Activated T-helper 2 cell treated with anti-CD3 and anti-CD28 coated beads, Interferon-gamma antibody, Interleukin-2, Interleukin-4, amounts not matched to agents 10 μg/mL and 5 μg/mL and 100 μg/mL, durations not matched to agents 14 hours and 24 hours and 36 hours (primary cell): ENCODE measurements at regions of chrX and their contacts with region 1.

Region 1: DNA sequence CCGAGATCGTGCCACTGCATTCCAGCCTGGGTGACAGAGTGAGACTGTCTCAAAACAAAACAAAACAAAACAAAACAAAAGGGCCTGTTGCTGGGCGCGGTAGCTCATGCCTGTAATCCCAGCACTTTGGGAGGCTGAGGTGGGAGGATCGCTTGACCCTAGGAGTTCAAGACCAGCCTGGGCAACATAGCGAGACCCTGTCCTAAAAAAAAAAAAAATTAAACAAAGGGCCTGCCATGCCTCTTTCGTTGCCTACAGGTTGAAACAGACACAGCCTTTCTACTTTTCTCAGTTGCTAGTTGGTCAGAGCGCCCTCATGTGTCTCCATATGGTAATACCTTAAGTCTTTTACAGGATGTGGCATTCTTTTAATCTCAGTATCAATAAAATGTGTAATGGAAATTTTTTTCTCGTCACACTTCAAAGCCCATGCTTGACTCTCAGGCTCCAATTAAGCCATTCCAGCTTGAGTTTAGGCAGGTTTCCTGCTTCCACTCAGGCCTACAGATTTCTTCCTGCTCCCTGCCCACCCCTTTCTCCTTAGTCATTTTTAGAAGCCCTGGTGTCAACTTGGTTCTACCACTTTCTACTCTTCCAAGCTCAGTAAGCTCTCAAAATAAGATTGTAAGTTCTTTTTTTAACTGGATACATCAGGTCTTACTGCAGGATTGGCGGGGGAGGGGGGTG is 4.7 kb upstream of the SOWAHD start:
- DNase-seq: peak; percentile 53
- H3K4me3 Mint-ChIP-seq: no peak overlapping the region
- H3K27ac Mint-ChIP-seq: peak overlapping the region; percentile 83
- H3K4me1 Mint-ChIP-seq: peaks cover 38% of the 10 kb centered on the region
- H3K27me3 Mint-ChIP-seq: no peaks in the 10 kb centered on the region

Region 2: DNA sequence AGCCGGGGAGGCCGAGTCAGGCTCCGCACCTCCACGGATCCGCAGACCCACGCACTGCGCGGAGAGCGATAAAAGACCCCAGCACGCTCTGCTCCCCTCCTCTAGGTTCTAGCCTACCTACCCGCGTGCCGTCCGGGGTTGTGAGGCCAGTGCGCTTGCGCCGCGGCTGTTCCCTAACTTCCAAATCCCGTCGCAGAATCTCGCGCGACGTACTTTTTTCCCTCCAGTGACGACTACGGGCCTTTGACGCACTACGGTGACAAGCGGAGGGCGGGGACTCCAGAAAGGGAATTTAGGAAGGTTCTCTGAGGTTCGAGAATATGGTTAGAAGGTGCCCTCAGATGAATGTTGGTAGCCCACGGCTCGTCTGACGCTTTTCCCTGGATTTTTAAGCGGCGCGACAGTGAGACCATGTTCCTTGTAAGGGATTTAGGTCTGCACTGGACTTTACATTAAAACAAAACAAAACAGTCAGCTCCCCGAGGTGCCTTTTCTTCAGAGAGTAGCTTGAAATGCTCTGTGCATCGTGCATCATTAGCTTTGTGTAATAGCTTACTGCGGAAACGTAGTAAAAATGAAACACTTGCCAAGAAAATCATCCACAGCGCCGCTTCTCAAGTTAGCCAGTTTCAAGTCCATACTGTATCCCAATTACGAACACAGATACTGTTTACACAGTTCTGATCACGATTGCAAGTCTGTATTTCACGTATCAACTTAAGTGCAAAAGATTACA is 147.3 kb before region 1 on chrX and contains the start of gene NKRF:
- intact Hi-C with region 1: loop called (anchors 5 kb)
- DNase-seq: peak; percentile 86
- H3K4me3 Mint-ChIP-seq: peak within 1 kb of the TSS; percentile 97
- H3K27ac Mint-ChIP-seq: peak within 1 kb of the TSS; percentile 96
- H3K4me1 Mint-ChIP-seq: peaks cover 20% of the 10 kb centered on the region
- H3K27me3 Mint-ChIP-seq: no peaks in the 10 kb centered on the region
- total RNA-seq, gene NKRF: 25.1 and 25.9 TPM in 2 replicates